Esophagus squamous epithelium (tissue), 5 donors: ENCODE measurements at regions of chr2 and their contacts with region 1.

Region 1: GRCh38 chr2:240232961-240233893 is 92.8 kb upstream of the OTOS start:
- DNase-seq: peak; percentile 26
- H3K4me3 ChIP-seq: peak overlapping the region; percentile 19 to 63 (median 36)
- H3K27ac ChIP-seq: peak overlapping the region; percentile 63 to 79 (median 74)
- H3K4me1 ChIP-seq: peaks cover 37 to 56% (median 44%) of the 10 kb centered on the region in 3 donors
- H3K27me3 ChIP-seq: peaks cover 0 to 6% (median 0%) of the 10 kb centered on the region in 4 donors
- CTCF ChIP-seq: peak; percentile 69 to 96 (median 93)
- POLR2A ChIP-seq: peak in 1 of 4 donors; percentile 28

Region 2: GRCh38 chr2:239858179-239858578 is 375.0 kb before region 1 on chr2:
- intact Hi-C with region 1: no loop called
- DNase-seq: no peak
- H3K4me3 ChIP-seq: no peak overlapping the region
- H3K27ac ChIP-seq: no peak overlapping the region
- H3K4me1 ChIP-seq: no peaks in the 10 kb centered on the region
- H3K27me3 ChIP-seq: peaks cover 0 to 29% (median 0%) of the 10 kb centered on the region in 4 donors
- CTCF ChIP-seq: no peak
- POLR2A ChIP-seq: no peak

Region 3: DNA sequence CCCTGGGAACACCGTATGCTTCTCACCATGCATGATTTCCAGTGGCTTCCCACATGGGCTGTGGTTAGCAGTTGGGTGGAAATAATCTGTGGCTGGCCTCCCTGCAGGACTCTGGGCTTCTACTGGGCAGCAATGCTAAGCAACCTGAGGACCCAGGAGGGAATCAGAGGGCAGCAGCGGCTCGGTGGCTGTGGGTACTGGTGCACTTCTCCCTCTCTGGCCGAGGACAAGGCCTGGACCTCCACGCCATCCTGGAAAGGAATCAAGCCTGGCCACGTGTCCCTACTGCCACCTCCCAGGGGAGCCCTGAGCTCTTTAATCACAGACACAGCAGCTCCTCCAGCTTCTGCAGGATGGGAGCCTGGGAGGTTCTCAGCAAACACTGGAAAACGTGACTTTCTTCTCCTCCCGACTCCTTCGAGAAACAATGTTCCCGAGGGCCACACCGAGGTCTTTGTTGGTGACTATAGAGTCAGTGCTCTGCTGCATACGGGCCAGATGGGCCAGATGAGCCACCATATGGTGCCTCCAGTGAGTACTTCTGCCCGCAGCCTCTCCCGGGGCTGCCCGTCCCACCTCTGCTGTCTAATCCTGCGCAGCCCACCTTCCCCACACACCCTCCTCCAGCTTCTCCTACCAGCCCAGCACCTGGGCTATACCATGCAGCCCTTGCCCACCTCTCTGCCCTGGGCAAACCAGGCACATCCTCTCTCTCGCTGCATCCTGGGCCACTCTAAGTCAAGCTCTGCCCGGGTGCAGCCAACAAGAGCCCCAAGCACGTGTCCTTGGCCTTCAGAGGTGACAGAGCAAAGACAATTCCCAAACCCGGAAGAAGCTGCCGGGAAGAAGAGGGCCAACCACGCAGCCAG is 50.0 kb before region 1 on chr2:
- intact Hi-C with region 1: no loop called
- DNase-seq: no peak
- H3K4me3 ChIP-seq: no peak overlapping the region
- H3K27ac ChIP-seq: no peak overlapping the region
- H3K4me1 ChIP-seq: peaks cover 0 to 10% (median 0%) of the 10 kb centered on the region in 3 donors
- H3K27me3 ChIP-seq: peaks cover 0 to 46% (median 0%) of the 10 kb centered on the region in 4 donors
- CTCF ChIP-seq: no peak
- POLR2A ChIP-seq: no peak

Region 4: GRCh38 chr2:240437861-240438809 is 204.9 kb after region 1 on chr2:
- intact Hi-C with region 1: loop called (anchors 2 kb)
- DNase-seq: no peak
- H3K4me3 ChIP-seq: peak overlapping the region; percentile 63 to 90 (median 72)
- H3K27ac ChIP-seq: peak overlapping the region; percentile 79 to 99 (median 94)
- H3K4me1 ChIP-seq: peaks cover 65 to 95% (median 69%) of the 10 kb centered on the region in 3 donors
- H3K27me3 ChIP-seq: peaks cover 0 to 39% (median 0%) of the 10 kb centered on the region in 4 donors
- CTCF ChIP-seq: peak; percentile 86 to 97 (median 93)
- POLR2A ChIP-seq: no peak